HEK293T (cell line): ENCODE measurements at regions of chr5 and their contacts with region 1.

Region 1: DNA sequence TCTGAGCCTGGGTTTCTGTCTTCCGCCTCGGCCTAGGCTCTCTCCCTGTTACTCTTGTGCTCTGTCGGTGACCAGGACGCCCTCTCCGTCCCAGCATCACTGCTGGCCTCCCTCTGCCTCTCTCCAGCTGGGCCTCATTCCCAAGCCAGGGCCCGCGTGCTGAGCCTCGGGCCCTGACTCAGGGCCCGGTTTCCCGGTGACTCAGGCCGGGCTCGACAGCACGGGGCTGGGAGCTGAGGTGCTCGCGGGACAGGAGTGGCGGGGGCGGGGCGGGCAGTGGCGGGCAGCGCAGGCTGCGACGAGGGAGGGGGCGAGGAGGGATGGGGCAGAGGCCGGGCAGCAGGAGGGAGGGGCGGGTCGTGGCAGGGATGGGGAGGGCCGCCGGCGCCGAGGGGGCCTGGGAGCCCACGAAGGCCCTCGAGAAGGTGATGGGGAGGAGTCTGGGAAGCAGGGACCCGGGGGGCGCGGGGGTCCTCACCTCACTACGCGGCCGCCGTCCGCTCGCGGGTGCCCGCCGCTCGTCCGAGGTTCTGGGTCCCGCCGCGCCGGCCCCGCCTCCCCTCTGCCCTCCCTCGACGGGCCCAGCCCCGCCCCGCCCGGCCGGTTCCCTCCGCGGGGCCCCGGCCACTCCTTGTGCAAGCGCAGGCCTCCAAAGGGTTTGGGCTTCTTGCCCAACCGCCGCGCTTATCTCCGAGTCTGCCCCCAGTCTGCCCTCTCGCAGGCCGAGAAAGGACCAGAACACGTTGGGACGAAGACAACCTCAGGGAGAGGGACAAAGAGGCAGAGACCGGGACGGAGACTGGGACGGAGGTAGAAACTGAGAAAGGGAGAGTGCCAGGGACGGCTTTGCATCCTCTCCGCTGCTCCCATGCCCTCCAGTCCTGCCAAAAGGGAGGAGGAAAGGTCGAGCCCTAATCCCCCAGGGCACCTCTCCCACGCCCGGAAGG is at the start of gene ARAP3:
- DNase-seq: peak; percentile 49

Region 2: DNA sequence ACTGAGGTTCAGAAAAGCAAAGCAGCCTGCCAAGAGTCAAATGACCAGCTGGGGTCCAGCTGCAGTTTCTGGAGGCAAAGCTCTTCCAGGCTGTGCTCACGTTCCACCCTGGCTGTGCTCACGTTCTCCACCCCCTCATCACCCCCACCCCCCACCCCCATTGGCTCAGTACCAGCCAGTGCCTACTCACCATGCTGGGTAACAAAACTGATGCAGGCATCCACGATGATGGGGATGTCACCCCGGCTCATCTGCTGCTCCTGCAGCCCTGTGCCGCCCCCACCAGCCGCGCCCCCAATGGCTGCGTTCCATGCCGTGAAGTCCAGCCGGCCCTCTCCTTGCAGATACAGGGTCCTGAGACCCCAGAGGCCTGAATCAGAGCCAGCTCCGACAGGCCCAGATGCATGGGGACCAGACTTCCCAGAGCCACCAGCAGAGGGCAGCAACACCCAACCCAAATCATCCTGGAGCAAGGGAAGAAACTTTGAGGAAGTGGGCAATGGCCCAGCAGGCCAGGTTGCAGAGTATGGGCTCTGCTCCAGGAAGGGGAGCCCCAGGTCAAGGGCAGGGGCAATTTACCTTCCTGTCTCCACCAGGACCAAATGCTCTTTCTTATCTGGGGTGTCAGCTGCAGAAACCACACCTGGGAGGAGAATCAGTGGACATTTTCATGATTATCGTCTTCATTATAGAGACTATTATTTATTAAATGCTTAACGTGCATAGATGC is 17.1 kb before region 1 on chr5:
- CTCF ChIA-PET with region 1: interaction called, 5 read pairs
- POLR2A ChIA-PET with region 1: interaction called, 11 read pairs
- DNase-seq: peak; percentile 84